Activated CD4-positive, alpha-beta memory T cell treated with anti-CD3 and anti-CD28 coated beads, Interleukin-2, amount 10 ng/mL, durations not matched to agents 7 days and 5 days (primary cell): ENCODE measurements at regions of chr1 and their contacts with region 1.

Region 1: GRCh38 chr1:119675349-119676345 is 27.6 kb upstream of the ZNF697 start:
- DNase-seq: peak; percentile 66
- H3K4me3 Mint-ChIP-seq: no peak overlapping the region
- H3K27ac Mint-ChIP-seq: no peak overlapping the region
- H3K4me1 Mint-ChIP-seq: peaks cover 4% of the 10 kb centered on the region
- H3K27me3 Mint-ChIP-seq: peaks cover 30% of the 10 kb centered on the region

Region 2: DNA sequence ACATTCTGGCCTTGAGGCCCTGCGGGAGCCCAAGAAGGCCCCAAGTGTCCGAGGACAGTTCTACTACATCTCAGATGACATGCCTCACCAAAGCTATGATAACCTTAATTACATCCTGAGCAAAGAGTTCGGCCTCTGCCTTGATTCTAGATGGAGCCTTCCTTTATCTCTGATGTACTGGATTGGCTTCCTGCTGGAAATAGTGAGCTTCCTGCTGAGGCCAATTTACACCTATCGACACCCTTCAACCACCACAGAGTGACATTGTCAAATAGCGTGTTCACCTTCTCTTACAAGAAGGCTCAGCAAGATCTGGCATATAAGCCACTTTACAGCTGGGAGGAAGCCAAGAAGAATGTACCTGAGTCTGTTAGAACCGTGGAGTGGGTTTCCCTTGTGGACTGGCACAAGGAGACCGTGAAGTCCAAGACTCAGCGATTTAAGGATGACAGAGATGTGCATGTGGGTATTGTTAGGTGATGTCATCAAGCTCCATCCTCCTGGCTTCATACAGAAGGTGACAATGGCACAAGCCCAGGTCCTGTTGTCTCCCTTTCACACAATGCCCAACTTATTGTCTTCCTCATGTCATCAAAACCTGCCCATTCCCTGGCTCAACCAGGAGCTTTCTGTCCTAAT is 66.7 kb before region 1 on chr1:
- CTCF ChIA-PET with region 1: interaction called, 79 read pairs
- POLR2A ChIA-PET with region 1: no interaction called
- DNase-seq: no peak
- H3K4me3 Mint-ChIP-seq: no peak overlapping the region
- H3K27ac Mint-ChIP-seq: no peak overlapping the region
- H3K4me1 Mint-ChIP-seq: no peaks in the 10 kb centered on the region
- H3K27me3 Mint-ChIP-seq: peaks cover 9% of the 10 kb centered on the region

Region 3: DNA sequence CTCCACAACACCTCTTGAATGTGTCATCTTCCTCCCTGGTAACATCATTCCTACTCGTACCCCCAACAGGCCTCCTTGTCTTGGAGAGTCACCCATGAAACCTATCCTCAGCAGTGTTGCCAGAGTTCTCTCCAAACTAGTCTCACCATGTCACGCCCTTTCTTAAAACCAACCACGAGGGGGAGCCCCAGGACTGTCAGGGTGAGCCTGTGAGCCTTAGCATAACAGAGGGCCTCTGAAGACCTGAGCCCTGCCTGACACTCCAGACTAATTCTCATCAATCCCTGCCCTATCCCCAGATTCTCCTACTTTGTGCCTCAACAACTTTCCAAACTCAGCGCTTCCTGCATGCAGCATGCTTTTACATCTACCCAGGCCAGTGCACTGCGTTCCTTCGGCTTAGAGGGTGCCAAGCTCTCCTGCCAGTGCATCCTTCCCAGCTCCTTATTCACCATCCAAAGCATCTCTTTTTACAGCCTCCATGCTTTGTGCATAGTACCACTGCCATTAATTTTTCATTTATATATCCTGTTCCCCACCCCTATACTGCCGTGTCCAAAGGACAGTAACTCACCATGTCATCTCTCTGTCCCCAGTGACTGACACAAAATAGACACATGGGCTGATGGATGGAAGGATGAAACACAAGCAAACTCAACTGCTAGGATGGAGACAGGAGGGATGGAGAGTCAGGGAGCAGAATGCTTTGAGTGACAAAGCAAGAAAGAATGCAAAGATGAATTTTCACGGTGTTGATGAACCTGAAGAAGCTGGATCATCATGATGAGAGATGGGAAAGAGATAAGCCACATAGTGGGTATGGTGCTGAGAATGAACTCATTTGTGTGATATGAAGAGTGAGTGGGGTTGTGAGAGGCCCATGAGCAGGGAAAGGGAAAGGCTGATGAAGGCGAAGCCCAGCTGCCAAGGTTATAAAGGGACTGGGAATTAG is 61.6 kb before region 1 on chr1:
- CTCF ChIA-PET with region 1: interaction called, 79 read pairs
- POLR2A ChIA-PET with region 1: no interaction called
- DNase-seq: peak; percentile 73
- H3K4me3 Mint-ChIP-seq: no peak overlapping the region
- H3K27ac Mint-ChIP-seq: no peak overlapping the region
- H3K4me1 Mint-ChIP-seq: no peaks in the 10 kb centered on the region
- H3K27me3 Mint-ChIP-seq: peaks cover 3% of the 10 kb centered on the region

Region 4: DNA sequence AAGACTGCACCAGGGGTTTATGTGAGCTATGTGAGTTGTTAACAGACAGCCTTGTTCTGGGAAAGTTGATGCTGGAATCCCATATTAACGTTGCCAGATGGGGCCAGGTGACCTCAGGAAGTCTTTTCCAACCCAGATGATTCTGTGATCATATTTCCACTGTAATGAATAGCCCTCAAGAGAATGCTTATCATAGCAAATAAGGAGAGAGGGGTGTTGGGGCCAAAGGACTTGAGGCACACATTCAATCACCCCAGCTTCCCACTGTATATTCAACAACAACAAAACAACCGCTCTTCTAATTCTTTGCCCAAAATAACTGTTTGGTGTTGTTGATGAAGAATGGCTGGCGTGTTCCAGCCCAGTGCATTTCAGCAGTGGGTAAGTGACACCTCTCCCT is 41.6 kb before region 1 on chr1:
- CTCF ChIA-PET with region 1: no interaction called
- POLR2A ChIA-PET with region 1: no interaction called
- DNase-seq: no peak
- H3K4me3 Mint-ChIP-seq: no peak overlapping the region
- H3K27ac Mint-ChIP-seq: no peak overlapping the region
- H3K4me1 Mint-ChIP-seq: peaks cover 1% of the 10 kb centered on the region
- H3K27me3 Mint-ChIP-seq: peaks cover 49% of the 10 kb centered on the region

Region 5: DNA sequence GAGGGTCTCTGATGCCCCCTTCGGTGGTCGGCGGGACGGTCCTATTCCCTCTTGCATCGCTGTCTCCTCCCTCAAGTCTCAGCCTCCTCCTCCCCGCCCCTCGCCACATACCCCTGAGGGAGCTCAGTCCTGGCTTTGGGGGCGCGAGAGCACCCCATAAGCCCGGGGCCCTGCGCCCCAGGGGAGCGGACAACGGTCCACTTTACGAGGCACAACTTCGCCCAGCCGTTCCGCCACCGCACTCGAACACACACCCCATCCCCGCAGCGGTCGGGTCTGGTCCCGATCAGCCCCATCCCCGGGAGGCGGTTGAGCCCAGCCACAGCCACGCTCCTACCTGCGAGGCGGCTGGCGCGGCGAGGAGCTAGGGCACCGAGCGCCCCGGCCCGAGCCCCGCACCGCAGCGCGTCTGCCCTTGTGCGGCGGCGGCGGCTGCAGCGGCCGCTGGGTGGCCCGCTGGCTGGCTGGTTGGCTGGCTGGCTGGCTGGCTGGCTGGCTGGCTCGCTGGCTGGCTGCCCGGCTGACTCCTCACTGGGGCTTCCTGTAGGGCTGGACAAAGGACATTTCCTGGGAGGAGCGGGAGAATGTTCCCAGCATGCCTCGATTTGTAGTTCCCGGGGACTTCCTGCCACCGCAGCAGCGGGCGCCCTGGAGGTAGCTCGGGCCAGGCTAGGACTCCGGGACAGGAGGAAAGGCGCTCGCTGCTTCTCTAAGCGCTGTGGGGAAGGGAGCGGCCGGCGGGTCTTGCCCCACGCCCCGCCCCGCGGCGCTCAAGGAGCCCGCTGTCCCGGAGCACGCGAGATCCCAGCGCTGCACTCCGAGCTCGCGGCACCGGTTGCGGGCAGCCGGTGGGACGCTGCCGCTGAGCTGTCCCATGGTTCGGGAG is 27.7 kb before region 1 on chr1 and contains the start of gene ZNF697:
- CTCF ChIA-PET with region 1: interaction called, 19 read pairs
- POLR2A ChIA-PET with region 1: no interaction called
- DNase-seq: peak; percentile 34
- H3K4me3 Mint-ChIP-seq: peak within 1 kb of the TSS; percentile 61
- H3K27ac Mint-ChIP-seq: no peak within 1 kb of the TSS
- H3K4me1 Mint-ChIP-seq: peaks cover 10% of the 10 kb centered on the region
- H3K27me3 Mint-ChIP-seq: peaks cover 85% of the 10 kb centered on the region
- total RNA-seq, gene ZNF697: 0.13 to 0.15 TPM